Activated CD4-positive, alpha-beta memory T cell treated with anti-CD3 and anti-CD28 coated beads, Interleukin-2, amount 10 ng/mL, durations not matched to agents 7 days and 5 days (primary cell): ENCODE measurements at regions of chr20 and their contacts with region 1.

Region 1: DNA sequence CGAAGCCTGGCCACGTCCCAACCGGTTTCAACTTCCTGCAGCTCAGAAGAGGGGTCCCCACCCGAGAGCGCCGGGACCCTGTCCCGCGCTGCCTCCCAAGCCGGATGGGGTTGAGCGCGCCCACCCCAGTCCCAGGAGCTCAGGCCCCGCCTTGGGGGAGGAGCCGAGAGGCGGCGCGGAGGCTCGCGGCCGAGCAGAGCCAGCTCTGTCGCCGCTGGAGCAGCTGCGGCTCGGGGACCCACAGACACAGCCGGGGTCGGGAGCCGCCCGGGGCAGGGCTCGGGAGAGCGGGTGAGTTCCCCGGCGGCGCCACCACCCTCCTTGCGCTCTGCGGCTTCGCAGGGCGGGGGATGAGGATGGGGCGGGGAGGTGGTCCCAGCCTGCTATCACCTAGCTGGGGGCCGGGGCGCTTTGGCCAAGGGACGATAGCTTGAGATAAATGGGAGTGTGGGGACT is at the start of gene PPP1R16B:
- DNase-seq: peak; percentile 88
- H3K4me3 Mint-ChIP-seq: peak within 1 kb of the TSS; percentile 91
- H3K27ac Mint-ChIP-seq: peak within 1 kb of the TSS; percentile 100
- H3K4me1 Mint-ChIP-seq: peaks cover 68% of the 10 kb centered on the region
- H3K27me3 Mint-ChIP-seq: no peaks in the 10 kb centered on the region
- total RNA-seq, gene PPP1R16B: 113 to 119 TPM

Region 2: GRCh38 chr20:38649275-38649891 is 156.1 kb before region 1 on chr20:
- CTCF ChIA-PET with region 1: no interaction called
- POLR2A ChIA-PET with region 1: no interaction called
- DNase-seq: peak; percentile 20
- H3K4me3 Mint-ChIP-seq: no peak overlapping the region
- H3K27ac Mint-ChIP-seq: no peak overlapping the region
- H3K4me1 Mint-ChIP-seq: peaks cover 7% of the 10 kb centered on the region
- H3K27me3 Mint-ChIP-seq: peaks cover 45% of the 10 kb centered on the region

Region 3: DNA sequence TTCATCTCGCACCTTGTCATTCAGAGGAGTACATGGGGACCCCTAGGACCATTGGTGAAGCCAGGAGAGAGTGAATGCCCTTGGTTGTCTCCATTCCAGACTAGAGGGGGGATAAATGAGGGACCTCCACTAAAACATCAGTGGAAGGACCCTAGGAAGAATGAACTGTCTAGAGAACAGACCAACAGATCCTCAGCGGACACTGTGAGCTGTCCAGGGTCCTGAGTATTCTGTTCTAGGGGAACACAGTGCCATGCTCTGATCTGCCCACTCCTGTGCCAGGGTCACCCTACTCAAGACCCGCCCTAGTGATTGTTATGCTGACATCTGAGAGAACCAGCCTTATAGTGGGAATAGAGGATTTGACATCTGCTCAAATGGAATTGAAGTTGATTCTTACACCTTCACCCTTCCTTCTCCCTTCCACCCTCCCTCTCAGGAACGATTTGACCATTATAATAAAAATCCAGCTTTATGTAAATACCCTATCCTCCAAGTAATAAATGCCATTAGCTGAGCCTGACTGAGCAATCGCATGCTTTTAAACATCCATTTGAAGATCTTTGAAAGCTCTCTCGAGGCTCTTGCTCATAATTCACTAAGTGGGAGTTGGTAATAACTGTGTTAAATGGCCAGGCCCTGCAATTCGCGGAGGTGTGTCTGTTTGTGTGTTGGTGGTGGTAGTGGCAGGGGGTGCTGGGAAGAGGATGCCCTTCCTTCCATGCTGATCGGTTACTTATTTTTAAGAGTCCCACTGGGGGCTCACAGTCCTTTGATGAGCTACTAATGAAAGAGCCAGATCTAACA is 124.8 kb before region 1 on chr20:
- CTCF ChIA-PET with region 1: no interaction called
- POLR2A ChIA-PET with region 1: no interaction called
- DNase-seq: peak; percentile 39
- H3K4me3 Mint-ChIP-seq: no peak overlapping the region
- H3K27ac Mint-ChIP-seq: no peak overlapping the region
- H3K4me1 Mint-ChIP-seq: no peaks in the 10 kb centered on the region
- H3K27me3 Mint-ChIP-seq: peaks cover 16% of the 10 kb centered on the region

Region 4: GRCh38 chr20:38764567-38765355 is 40.8 kb before region 1 on chr20:
- CTCF ChIA-PET with region 1: interaction called, 6 read pairs
- POLR2A ChIA-PET with region 1: interaction called, 17 read pairs
- DNase-seq: peak; percentile 67
- H3K4me3 Mint-ChIP-seq: no peak overlapping the region
- H3K27ac Mint-ChIP-seq: peak overlapping the region; percentile 37
- H3K4me1 Mint-ChIP-seq: peaks cover 23% of the 10 kb centered on the region
- H3K27me3 Mint-ChIP-seq: no peaks in the 10 kb centered on the region

Region 5: DNA sequence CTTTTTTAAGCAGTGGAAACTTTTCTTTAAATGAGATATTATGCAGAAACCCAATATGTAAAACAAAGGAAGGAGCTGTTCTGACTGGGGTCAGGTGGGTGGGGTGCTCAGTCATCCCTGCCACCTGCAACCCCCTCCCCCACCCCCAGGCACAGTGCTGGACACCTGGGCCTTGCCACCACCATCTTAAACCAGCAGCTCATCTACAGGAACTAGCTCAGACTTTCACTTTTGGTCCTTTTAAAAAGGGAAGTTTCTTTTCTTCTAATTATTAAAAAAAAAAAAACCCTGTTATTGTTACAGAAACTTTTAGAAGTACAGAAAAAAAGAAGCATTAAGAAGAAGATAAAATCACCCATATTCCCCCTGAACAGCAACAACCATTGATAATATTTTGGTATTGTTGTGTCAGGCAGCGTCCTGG is 37.0 kb after region 1 on chr20:
- CTCF ChIA-PET with region 1: interaction called, 5 read pairs
- POLR2A ChIA-PET with region 1: interaction called, 57 read pairs
- DNase-seq: peak; percentile 39
- H3K4me3 Mint-ChIP-seq: peak overlapping the region; percentile 8
- H3K27ac Mint-ChIP-seq: peak overlapping the region; percentile 80
- H3K4me1 Mint-ChIP-seq: peaks cover 74% of the 10 kb centered on the region
- H3K27me3 Mint-ChIP-seq: no peaks in the 10 kb centered on the region

Region 6: GRCh38 chr20:38893565-38894090 is 88.1 kb after region 1 on chr20:
- CTCF ChIA-PET with region 1: interaction called, 19 read pairs
- POLR2A ChIA-PET with region 1: interaction called, 14 read pairs
- DNase-seq: peak; percentile 81
- H3K4me3 Mint-ChIP-seq: no peak overlapping the region
- H3K27ac Mint-ChIP-seq: peak overlapping the region; percentile 83
- H3K4me1 Mint-ChIP-seq: peaks cover 59% of the 10 kb centered on the region
- H3K27me3 Mint-ChIP-seq: no peaks in the 10 kb centered on the region